ENCODE measurements at regions of chr22 and their contacts with region 1.

Region 1: GRCh38 chr22:45863981-45864751 is 112.8 kb downstream of the WNT7B start:
- DNase-seq: peak; percentile 72
- H3K4me3 ChIP-seq: no peak overlapping the region
- H3K27ac ChIP-seq: no peak overlapping the region
- H3K4me1 ChIP-seq: no peaks in the 10 kb centered on the region
- CTCF ChIP-seq: peak; percentile 93

Region 2: GRCh38 chr22:45577746-45578523 is 286.2 kb before region 1 on chr22:
- CTCF ChIA-PET with region 1: no interaction called
- POLR2A ChIA-PET with region 1: no interaction called
- intact Hi-C with region 1: loop called (anchors 2 kb)
- DNase-seq: peak; percentile 82
- H3K4me3 ChIP-seq: no peak overlapping the region
- H3K27ac ChIP-seq: no peak overlapping the region
- H3K4me1 ChIP-seq: no peaks in the 10 kb centered on the region
- CTCF ChIP-seq: peak; percentile 96

Region 3: DNA sequence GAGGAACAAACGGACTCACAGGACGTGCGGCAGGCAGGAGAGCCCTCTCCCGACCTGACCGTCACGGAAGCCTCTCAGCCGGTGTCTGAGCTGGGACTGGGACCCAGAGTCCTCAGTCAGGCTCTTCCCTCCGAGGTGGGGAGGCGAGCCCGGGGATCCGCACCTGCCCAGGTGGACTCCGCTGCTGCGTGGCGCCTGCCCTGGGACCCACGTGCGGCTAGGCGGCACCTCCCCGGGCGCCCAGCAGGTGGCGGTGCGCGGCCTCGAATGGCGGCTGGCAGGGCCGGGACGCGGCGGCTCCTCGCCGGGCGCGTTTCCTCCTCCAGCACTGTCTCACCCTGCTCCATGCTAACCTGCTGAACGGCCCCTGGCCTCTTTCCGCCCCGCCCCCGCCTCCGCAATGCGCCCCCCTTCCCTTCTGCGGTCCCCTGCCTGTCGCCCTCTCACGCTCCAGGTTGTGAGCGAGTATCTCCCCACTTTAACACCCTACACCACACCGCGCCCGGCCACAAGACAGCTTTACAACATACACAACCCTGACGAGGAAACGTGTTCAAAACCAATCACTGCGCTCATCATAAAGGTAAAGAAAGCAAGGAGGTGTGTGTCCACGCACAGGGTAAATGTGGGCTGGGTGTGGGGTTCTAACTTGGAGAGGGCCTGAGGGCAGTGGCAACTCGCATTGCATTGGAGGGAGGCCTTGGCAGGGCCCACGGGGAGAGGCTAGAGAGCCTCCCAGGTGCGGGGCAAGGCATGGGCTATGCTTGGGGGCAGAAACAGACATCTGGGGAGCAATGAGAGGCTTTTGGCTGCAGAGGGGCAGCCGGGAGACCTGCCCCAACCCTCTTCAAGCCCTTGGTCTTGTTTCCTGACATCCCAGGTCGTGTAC is 218.4 kb before region 1 on chr22:
- CTCF ChIA-PET with region 1: interaction called, 4 read pairs
- POLR2A ChIA-PET with region 1: no interaction called
- intact Hi-C with region 1: loop called (anchors 2 kb)
- DNase-seq: peak; percentile 57
- H3K4me3 ChIP-seq: no peak overlapping the region
- H3K27ac ChIP-seq: no peak overlapping the region
- H3K4me1 ChIP-seq: no peaks in the 10 kb centered on the region
- CTCF ChIP-seq: peak; percentile 83

Region 4: DNA sequence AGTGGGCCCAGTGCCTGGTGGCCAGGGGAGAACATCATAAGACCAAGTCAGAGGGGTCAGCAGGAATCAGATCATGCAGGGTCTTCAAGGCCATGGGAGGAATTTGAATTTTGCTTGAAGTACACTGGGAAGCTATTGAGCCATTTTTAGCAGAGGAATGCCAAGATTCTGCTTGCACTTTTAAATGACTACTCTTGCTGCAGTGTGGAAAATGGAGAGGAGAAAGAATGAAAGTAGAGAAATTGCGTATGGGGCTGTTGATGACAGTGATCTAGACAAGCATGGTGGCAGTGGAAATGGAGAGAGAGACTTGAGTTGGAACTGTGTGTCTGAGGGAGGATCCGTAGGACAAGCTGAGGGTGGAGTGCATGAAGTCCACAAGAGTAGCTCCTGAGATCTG is 15.3 kb before region 1 on chr22:
- CTCF ChIA-PET with region 1: no interaction called
- POLR2A ChIA-PET with region 1: no interaction called
- intact Hi-C with region 1: no loop called
- DNase-seq: no peak
- H3K4me3 ChIP-seq: no peak overlapping the region
- H3K27ac ChIP-seq: no peak overlapping the region
- H3K4me1 ChIP-seq: no peaks in the 10 kb centered on the region
- CTCF ChIP-seq: no peak

Region 5: DNA sequence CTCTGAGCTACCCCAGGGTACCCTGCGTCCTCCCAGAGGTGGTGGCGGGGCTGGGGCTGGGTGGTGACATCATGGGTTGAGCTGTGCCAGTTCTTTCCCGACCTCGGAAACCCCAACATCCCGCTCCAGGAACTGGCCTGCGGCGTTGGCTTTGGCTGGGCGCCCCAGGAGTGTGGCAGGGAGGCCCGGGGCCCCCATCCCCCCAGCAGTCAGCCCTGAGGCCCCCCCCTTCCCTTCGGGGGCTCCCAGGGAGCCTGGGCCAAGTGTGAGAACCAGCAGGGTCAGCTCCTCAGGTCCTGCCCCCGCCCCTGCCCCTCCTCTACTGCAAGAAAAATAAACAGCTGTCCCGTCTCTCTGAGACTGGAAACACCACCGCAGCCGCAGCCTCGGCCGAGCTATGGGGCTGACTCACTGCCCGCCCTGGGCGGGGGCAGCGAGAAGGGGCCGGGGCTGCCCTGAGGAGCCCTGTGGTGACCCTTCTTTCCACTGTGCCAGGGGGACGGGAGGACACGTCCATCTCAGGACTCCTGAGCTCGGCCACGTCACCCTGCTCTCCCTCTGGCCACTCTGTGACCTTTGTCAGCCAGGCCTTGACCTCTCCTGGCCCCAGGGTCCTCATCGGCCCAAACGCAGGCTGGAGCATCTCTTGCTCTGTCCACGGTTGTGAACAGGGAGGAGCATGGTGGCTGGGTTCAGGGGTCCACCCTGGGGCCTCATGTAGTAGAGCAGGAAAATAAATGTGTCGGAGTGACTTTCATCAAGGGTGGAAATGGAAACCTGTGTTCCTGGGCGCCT is 39.4 kb after region 1 on chr22:
- CTCF ChIA-PET with region 1: no interaction called
- POLR2A ChIA-PET with region 1: no interaction called
- intact Hi-C with region 1: no loop called
- DNase-seq: no peak
- H3K4me3 ChIP-seq: no peak overlapping the region
- H3K27ac ChIP-seq: no peak overlapping the region
- H3K4me1 ChIP-seq: no peaks in the 10 kb centered on the region
- CTCF ChIP-seq: no peak

Region 6: GRCh38 chr22:45925811-45926351 is 61.7 kb after region 1 on chr22:
- CTCF ChIA-PET with region 1: no interaction called
- POLR2A ChIA-PET with region 1: no interaction called
- intact Hi-C with region 1: no loop called
- DNase-seq: no peak
- H3K4me3 ChIP-seq: no peak overlapping the region
- H3K27ac ChIP-seq: no peak overlapping the region
- H3K4me1 ChIP-seq: no peaks in the 10 kb centered on the region
- CTCF ChIP-seq: no peak

Measured in OCI-LY7 (cell line).